Mammary epithelial cell (primary cell): ENCODE measurements at regions of chr10 and their contacts with region 1.

Region 1: DNA sequence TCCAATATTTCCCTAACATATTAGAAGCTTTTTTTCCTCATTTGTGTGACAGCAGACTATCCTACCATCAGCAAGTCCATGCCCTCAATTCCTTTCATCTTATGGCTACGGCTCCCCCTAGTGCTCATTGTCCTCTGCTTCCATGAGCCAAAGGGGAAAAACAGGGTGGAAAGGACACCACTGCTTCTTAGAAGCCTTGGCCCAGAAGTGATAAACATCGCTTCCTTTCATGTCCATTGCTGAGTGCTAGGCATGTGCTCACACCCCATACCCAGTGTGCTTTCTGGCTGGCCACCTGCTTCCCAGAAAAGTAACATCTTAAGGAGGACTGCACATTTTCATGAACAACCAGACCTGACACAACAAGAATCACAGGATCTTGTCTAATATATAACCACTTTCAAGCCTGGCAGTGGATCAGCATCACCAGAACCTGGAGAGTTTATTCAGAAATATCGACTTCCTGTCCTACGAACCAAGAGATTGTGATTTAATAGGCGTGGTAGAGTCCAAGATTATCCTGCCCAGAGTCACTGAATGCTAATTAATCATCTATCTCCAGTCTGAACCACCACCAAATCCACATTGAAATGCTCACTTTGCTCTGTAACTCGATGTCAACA is 650.5 kb upstream of the SORCS1 start:
- DNase-seq: peak; percentile 63
- H3K4me3 ChIP-seq: no peak overlapping the region
- H3K27ac ChIP-seq: no peak overlapping the region
- H3K4me1 ChIP-seq: no peaks in the 10 kb centered on the region
- H3K27me3 ChIP-seq: no peaks in the 10 kb centered on the region
- CTCF ChIP-seq: peak; percentile 84 to 91

Region 2: GRCh38 chr10:106705681-106706100 is 1109.3 kb before region 1 on chr10:
- CTCF ChIA-PET with region 1: no interaction called
- dilution Hi-C with region 1: no loop called
- in situ Hi-C with region 1: loop called in 1 of 2 experiments (anchors 25 kb)
- intact Hi-C with region 1: loop called (anchors 2 kb)
- DNase-seq: peak; percentile 31
- H3K4me3 ChIP-seq: no peak overlapping the region
- H3K27ac ChIP-seq: no peak overlapping the region
- H3K4me1 ChIP-seq: no peaks in the 10 kb centered on the region
- H3K27me3 ChIP-seq: no peaks in the 10 kb centered on the region
- CTCF ChIP-seq: peak; percentile 88

Region 3: DNA sequence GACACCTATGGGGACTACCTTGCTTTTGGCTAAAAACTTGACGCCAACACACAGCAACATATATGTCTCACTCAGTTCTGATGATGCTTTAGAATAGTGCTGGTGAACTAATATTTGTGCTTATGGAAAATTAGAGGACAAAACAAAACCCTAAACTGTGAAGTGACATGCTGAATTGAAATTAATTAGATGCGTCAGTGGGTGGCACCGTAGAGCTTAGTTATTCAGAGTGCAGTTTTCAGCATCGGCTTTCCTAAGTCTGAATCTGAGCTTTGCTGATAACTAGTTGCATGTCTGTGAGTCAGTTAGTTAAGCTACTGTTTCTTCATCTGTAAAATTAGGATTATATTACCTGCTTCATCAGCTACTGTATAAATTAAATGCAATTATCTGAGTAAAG is 405.5 kb before region 1 on chr10:
- CTCF ChIA-PET with region 1: no interaction called
- dilution Hi-C with region 1: no loop called
- in situ Hi-C with region 1: loop called (anchors 10 to 25 kb)
- intact Hi-C with region 1: loop called (anchors 1 kb)
- DNase-seq: peak; percentile 14
- H3K4me3 ChIP-seq: no peak overlapping the region
- H3K27ac ChIP-seq: no peak overlapping the region
- H3K4me1 ChIP-seq: no peaks in the 10 kb centered on the region
- H3K27me3 ChIP-seq: no peaks in the 10 kb centered on the region
- CTCF ChIP-seq: peak; percentile 35 to 56

Region 4: GRCh38 chr10:107418407-107418806 is 396.6 kb before region 1 on chr10:
- CTCF ChIA-PET with region 1: no interaction called
- dilution Hi-C with region 1: no loop called
- in situ Hi-C with region 1: loop called (anchors 10 to 25 kb)
- intact Hi-C with region 1: no loop called
- DNase-seq: no peak
- H3K4me3 ChIP-seq: no peak overlapping the region
- H3K27ac ChIP-seq: no peak overlapping the region
- H3K4me1 ChIP-seq: no peaks in the 10 kb centered on the region
- H3K27me3 ChIP-seq: no peaks in the 10 kb centered on the region
- CTCF ChIP-seq: no peak

Region 5: GRCh38 chr10:107546287-107546686 is 268.7 kb before region 1 on chr10:
- CTCF ChIA-PET with region 1: interaction called, 6 read pairs
- dilution Hi-C with region 1: no loop called
- in situ Hi-C with region 1: no loop called
- intact Hi-C with region 1: loop called (anchors 1 kb)
- DNase-seq: peak; percentile 92
- H3K4me3 ChIP-seq: peak overlapping the region; percentile 26 to 39 (median 36)
- H3K27ac ChIP-seq: peak overlapping the region; percentile 74
- H3K4me1 ChIP-seq: peaks cover 19% of the 10 kb centered on the region
- H3K27me3 ChIP-seq: no peaks in the 10 kb centered on the region
- CTCF ChIP-seq: no peak